ENCODE measurements at regions of chr1 and their contacts with region 1.

Region 1: DNA sequence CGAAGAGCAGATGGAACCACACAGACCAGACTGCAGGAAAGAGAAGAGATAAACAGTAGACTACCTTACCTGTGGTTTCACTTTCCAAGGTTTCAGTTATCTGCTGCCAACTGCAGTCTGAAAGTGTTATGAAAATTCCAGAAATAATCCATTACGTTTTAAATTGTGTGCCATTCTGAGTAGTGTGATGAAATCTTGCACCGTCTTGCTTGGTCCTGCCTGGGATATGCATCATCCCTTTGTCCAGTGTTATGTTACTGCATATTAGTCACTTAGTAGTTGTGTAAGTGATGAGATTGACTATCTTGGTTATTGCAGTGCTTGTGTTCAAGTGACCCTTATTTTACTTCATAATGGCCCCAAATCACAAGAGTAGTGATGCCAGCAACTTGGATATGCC is 33.9 kb downstream of the DNAJC6 start:
- DNase-seq: no peak
- CTCF ChIP-seq: no peak

Region 2: DNA sequence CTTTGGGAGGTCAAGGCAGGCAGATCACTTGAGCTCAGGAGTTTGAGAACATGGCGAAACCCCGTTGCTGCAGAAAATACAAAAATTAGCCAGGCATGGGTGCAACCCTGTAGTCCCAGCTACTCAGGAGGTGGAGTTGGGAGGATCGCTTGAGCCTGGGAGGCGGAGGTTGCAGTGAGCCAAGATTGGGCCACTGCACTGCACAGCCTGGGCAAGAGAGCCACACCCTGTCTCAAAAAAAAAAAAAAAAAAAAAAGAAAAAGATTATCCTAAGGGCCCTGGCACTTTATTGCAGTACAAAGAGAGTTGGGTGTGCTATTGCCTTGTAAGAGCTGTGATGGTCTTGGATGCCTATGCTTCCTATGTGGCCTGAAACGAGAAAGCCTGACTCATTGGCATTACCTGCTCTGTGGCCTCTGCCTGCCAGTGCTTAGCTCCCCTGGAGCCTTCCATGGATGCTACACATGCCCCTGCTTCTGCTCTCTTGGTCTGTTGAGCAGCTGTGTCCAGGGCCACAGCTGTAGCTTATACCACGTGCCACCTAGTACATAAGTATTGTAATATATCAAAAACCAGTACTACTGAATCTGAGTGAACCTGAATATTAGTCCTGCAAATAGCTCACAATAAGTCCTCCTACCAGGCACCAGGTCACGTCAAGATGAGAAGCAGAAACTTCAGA is 11.9 kb after region 1 on chr1:
- CTCF ChIA-PET with region 1: interaction called, 10 read pairs
- POLR2A ChIA-PET with region 1: no interaction called
- DNase-seq: no peak
- CTCF ChIP-seq: no peak

Measured in GM10248 (cell line).